Ovary (tissue), 10 donors: ENCODE measurements at regions of chr17 and their contacts with region 1.

Region 1: DNA sequence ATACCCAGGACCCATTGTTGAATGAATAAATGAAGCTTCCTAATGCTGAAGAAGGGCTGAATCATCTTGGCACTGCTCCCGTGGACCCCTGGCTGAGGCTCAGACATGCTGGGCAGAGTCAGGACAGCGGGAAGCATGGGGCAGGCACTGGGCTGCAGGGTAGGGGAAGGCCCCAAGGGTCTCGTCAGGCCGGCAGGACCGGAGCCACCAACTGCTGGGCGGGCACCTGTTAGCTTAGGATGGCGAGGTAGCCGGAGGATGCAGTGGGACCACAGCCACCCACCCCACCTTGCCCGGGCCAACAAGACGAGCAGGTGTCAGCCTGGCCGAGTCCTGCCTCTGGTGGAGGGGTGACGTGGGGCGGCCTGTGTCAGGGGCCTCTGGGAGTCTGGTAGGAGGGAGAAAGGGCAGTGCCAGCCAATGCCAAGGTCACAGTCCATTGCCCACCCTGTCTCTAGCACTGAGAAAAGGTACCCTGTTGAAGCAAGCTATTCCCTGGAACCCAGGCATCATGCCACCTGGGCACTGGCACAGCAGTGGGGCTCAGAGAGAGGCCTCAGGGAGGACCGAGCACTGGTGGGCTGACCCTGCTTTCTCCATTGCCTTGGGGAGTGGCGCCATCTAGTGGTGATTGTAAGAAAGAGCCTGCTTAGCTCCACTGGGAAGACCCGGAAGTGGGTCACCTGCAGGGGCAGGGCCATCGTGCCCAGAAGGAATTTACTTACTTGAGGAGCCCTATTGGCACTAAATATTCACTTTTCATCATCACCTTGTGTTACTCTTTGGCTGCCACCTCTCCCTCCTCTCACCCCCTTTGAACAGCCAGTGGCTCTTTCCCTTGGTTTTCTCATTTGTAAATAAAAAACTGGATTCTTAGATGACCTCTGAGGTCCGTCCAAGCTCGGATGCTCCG is 3.0 kb upstream of the DLX3 start:
- DNase-seq: peak; percentile 74 to 83 (median 82)
- H3K4me3 ChIP-seq: no peak overlapping the region
- H3K27ac ChIP-seq: no peak overlapping the region
- H3K4me1 ChIP-seq: peaks cover 3% of the 10 kb centered on the region
- H3K27me3 ChIP-seq: peaks cover 3% of the 10 kb centered on the region
- CTCF ChIP-seq: peak; percentile 82 to 93 (median 89)
- EP300 ChIP-seq: no peak
- POLR2A ChIP-seq: no peak

Region 2: DNA sequence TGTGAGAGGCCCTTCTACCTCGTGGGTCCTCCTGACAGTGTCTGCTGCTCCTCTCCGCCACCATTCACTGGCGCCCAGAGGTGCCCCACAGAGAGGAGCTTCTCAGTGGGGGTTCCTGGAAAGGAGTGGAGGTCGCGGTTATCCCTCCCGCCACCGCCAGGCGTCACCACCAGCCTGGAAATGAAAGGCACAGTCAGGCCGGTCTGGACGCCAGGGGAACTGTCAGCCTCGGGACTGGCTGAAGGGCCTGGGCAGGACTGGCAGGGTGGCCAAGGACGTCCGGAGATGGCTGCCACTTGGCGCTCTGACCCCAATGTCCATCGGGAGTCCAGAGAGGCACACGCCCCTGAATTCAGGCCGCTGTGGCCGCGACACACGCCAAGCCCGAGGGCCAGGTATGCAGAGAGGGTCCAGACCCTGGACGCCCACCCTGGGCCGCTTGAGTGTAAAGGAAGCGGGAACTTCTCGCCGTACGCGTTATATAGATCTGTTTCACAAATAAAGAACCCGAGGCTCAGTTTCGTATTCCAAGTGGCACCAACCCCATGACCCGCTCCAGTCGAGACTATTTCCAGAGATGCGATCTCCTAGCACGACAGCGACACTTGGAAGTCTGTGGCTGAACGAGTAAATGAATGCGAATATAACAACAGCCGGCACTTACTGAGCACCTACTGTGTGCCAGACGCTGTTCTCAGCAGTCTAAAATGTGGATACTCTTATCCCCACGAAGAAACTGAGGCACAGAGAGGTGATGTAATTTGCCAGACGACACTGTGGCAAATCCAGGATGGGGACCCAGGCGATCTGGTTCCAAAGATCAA is 430.0 kb before region 1 on chr17:
- intact Hi-C with region 1: loop called in 2 of 4 experiments (anchors 5 kb)
- DNase-seq: peak; percentile 86 to 93 (median 92)
- H3K4me3 ChIP-seq: peak overlapping the region; percentile 29
- H3K27ac ChIP-seq: peak overlapping the region in 1 of 2 donors; percentile 59
- H3K4me1 ChIP-seq: peaks cover 2% of the 10 kb centered on the region
- H3K27me3 ChIP-seq: no peaks in the 10 kb centered on the region
- CTCF ChIP-seq: peak; percentile 80 to 100 (median 98)
- EP300 ChIP-seq: no peak
- POLR2A ChIP-seq: no peak

Region 3: DNA sequence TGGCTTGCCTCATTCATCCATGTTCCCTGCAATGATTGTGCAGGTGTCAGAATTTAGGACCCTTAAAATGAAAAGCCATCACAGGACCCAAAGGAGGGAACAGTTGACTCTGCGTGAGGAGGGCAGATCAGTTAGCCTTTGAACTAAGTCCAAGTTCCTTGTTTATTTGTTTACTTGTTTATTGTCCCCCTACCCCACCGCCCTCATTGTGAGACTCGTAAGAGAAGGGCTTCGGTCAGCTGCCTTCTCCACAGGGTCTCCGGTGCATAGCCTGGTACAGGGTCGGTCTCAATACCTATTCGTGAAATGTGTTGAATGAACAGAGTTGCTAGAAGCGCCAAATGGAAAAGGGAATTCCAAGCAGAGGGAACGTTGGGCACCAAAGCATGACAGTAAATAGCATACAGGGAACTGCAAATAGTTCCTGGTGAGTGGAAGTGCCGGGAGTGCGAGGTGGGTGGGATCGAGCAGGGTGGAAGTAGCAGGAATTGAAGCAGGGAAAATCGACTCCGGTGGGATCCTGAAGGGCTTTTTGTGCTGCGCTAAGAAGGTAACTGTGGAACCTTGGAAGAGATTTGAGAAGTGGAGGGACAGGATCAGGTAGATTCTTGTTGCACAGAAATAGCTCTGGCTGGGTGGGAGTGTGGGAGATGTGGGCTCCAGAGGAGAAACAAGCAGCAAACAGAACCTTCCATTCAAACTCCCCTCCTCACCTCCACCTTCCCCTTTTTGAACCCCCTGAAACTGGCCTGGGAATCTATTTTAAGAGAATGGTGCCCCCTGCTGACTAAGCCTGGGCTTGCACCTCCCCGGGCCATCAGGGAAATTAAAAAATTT is 303.0 kb before region 1 on chr17:
- intact Hi-C with region 1: loop called in 1 of 4 experiments (anchors 5 kb)
- DNase-seq: peak; percentile 41 to 75 (median 70)
- H3K4me3 ChIP-seq: no peak overlapping the region
- H3K27ac ChIP-seq: no peak overlapping the region
- H3K4me1 ChIP-seq: peaks cover 3% of the 10 kb centered on the region
- H3K27me3 ChIP-seq: no peaks in the 10 kb centered on the region
- CTCF ChIP-seq: peak; percentile 86 to 93 (median 90)
- EP300 ChIP-seq: no peak
- POLR2A ChIP-seq: peak; percentile 33

Region 4: DNA sequence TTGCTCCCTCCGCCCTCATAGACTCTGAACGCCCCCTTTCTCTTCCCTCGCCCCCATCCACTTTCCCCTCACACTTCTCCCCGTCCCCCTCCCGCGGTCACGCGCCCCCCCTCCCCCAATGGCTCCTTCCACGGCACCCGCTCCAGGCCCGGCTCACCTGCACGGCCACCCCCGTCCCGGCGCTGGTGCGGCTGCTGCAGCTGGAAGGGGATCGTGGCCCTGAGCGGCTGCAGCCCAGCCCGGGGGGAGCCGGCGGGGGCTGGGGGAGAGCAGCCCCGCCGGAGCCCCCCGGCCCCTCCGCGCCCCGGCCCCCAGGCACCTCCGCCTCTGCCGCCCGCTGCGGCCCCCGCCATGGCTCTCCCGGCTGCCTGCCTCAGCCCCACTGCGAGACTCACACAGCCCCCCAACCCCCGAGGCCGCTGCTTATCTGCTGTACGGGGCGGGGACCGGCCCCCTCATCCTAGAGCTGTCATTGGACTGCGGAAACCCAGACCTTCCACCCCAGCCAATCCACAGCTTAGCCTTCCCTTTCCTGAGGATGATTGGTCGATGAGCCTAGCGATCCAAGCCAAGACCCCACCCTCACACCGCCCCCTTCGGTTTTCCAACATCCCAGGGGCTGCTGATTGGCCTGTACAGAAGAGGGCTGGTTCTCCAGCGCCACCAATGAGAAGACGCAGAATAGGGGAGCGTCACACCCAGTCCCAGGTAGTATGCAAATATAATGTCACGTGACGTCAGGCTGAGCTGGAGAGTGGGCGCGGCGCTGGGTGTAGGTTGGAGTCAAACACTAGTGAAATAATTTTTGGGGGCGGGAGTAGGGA is 234.1 kb before region 1 on chr17 and contains the start of gene FAM117A:
- intact Hi-C with region 1: no loop called
- DNase-seq: peak; percentile 95 to 98 (median 95)
- H3K4me3 ChIP-seq: peak within 1 kb of the TSS; percentile 64
- H3K27ac ChIP-seq: peak within 1 kb of the TSS in 1 of 2 donors; percentile 49
- H3K4me1 ChIP-seq: peaks cover 7% of the 10 kb centered on the region
- H3K27me3 ChIP-seq: no peaks in the 10 kb centered on the region
- CTCF ChIP-seq: no peak
- EP300 ChIP-seq: no peak
- POLR2A ChIP-seq: peak; percentile 52
- total RNA-seq, gene FAM117A: 16.0 to 30.4 (median 19.0) TPM

Region 5: DNA sequence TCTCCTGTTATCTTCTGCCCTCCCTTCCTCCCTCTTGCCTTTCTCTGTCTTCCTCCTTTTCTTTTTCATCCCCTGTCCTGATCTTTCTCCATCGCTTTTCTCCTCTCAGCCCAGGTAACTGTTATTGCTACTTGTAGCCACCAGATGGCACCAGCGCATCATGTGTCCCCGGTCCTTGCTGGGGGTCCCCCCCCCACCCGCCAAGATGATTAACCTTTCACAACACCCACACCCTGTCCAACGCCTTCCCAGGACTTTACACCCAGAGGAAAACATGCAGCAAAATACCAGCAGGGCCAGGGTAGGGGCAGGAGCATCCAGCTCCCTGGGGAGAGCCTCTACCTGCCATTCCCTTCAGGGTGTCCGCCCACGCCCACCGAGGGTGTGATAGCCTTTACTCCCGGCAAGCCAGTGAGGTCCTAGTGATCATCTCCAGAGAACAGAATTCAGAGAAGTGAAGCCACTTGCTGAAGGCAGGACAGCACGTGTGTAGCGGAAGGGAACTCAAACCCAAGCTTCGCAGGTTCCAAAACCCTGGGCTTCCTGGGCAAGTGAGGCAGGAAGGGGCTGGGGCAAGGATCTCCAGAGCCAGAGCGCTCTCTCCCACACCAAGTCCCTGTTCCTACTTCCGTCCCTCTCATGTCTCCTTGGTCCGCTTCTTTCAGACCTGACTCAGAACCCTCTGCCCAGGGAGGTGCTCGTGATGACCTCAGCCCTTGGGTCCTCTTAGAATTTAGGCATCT is 136.7 kb before region 1 on chr17:
- intact Hi-C with region 1: loop called (anchors 5 kb)
- DNase-seq: peak; percentile 39 to 68 (median 59)
- H3K4me3 ChIP-seq: no peak overlapping the region
- H3K27ac ChIP-seq: no peak overlapping the region
- H3K4me1 ChIP-seq: no peaks in the 10 kb centered on the region
- H3K27me3 ChIP-seq: no peaks in the 10 kb centered on the region
- CTCF ChIP-seq: peak; percentile 37 to 64 (median 62)
- EP300 ChIP-seq: no peak
- POLR2A ChIP-seq: no peak

Region 6: GRCh38 chr17:49880291-49881053 is 117.6 kb before region 1 on chr17:
- intact Hi-C with region 1: loop called (anchors 1 to 5 kb)
- DNase-seq: peak; percentile 60 to 83 (median 77)
- H3K4me3 ChIP-seq: no peak overlapping the region
- H3K27ac ChIP-seq: no peak overlapping the region
- H3K4me1 ChIP-seq: peaks cover 1% of the 10 kb centered on the region
- H3K27me3 ChIP-seq: no peaks in the 10 kb centered on the region
- CTCF ChIP-seq: peak; percentile 93 to 95 (median 94)
- EP300 ChIP-seq: no peak
- POLR2A ChIP-seq: no peak

Region 7: DNA sequence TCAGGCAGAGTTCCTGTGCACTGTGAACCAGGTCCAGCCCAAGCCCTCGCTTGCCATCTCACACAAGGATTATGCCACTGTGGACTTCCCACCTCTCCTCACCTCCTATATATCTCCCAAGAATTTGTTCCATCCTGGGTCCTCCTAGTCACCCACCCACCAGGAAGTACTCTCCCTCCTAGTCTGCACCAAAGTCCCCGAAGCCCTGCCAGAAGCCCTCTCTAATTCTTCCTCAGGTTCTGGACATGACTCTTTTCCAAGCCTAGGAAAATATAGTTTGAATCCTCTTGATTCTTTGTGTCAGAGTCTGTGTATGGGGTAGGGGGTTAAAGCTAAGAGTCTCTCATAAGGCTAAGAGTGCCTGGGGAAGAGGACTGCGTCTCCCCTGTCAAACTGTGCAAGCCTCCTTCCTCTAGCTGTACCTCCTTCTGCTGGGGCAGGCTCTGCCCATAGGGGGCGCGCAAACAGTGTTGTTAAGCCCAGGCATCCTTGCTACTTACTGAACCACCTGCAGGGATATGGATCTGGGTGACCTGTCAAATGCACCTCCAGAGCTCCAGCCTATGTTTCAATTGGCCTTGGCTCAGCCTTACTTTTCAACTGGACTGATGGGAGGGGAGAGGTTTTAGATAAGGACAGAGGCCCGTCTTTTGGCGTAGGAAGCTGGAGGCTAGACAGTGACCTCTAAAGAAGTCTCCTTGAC is 45.7 kb before region 1 on chr17:
- intact Hi-C with region 1: loop called in 2 of 4 experiments (anchors 5 kb)
- DNase-seq: peak; percentile 79 to 88 (median 83)
- H3K4me3 ChIP-seq: no peak overlapping the region
- H3K27ac ChIP-seq: peak overlapping the region in 1 of 2 donors; percentile 62
- H3K4me1 ChIP-seq: peaks cover 21% of the 10 kb centered on the region
- H3K27me3 ChIP-seq: no peaks in the 10 kb centered on the region
- CTCF ChIP-seq: peak; percentile 22 to 71 (median 55)
- EP300 ChIP-seq: no peak
- POLR2A ChIP-seq: no peak

Region 8: GRCh38 chr17:50037321-50038071 is 39.4 kb after region 1 on chr17:
- intact Hi-C with region 1: no loop called
- DNase-seq: peak; percentile 75 to 89 (median 86)
- H3K4me3 ChIP-seq: no peak overlapping the region
- H3K27ac ChIP-seq: peak overlapping the region in 1 of 2 donors; percentile 54
- H3K4me1 ChIP-seq: peaks cover 24% of the 10 kb centered on the region
- H3K27me3 ChIP-seq: no peaks in the 10 kb centered on the region
- CTCF ChIP-seq: no peak
- EP300 ChIP-seq: no peak
- POLR2A ChIP-seq: no peak